ENCODE measurements at regions of chr7 and their contacts with region 1.

Region 1: DNA sequence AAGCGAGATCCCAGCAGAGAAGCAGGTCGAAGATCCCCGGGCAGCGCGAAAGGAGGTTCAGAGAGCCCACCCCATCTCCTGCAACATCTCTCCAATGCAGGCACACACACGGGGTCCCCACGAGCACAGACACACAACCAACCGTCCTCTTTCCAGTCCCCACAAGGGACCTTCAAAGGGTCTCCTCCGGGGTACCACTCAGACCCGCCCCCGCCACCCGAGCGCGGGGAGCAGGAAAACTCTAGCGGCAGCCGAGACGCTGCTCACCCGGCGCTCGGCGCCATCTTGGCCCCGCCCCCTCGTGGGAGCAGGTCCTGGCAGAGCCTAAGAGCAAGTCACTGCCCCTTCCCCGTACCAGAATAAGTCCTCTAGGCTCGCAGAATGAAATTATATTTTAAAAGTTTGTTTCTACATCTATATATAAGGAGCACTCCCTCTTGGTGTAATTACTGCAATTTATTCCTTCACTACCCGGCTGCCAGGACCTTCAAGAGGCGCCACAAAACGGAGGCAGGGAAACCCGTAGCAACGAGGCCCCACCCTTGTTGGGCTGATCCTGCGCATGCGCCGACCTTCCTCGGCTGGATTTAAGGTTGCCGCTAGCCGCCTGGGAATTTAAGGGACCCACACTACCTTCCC is at the starts of genes CNPY4 and TAF6:
- DNase-seq: peak; percentile 96
- H3K4me3 ChIP-seq: peak within 1 kb of the TSS; percentile 70 to 89 (median 77)
- H3K27ac ChIP-seq: peak within 1 kb of the TSS; percentile 83
- H3K4me1 ChIP-seq: peaks cover 11% of the 10 kb centered on the region
- H3K27me3 ChIP-seq: no peaks in the 10 kb centered on the region
- CTCF ChIP-seq: no peak
- POLR2A ChIP-seq: peak; percentile 86
- total RNA-seq, gene CNPY4: 18.0 and 33.7 TPM in 2 replicates
- total RNA-seq, gene TAF6: 64.6 and 67.3 TPM in 2 replicates

Region 2: DNA sequence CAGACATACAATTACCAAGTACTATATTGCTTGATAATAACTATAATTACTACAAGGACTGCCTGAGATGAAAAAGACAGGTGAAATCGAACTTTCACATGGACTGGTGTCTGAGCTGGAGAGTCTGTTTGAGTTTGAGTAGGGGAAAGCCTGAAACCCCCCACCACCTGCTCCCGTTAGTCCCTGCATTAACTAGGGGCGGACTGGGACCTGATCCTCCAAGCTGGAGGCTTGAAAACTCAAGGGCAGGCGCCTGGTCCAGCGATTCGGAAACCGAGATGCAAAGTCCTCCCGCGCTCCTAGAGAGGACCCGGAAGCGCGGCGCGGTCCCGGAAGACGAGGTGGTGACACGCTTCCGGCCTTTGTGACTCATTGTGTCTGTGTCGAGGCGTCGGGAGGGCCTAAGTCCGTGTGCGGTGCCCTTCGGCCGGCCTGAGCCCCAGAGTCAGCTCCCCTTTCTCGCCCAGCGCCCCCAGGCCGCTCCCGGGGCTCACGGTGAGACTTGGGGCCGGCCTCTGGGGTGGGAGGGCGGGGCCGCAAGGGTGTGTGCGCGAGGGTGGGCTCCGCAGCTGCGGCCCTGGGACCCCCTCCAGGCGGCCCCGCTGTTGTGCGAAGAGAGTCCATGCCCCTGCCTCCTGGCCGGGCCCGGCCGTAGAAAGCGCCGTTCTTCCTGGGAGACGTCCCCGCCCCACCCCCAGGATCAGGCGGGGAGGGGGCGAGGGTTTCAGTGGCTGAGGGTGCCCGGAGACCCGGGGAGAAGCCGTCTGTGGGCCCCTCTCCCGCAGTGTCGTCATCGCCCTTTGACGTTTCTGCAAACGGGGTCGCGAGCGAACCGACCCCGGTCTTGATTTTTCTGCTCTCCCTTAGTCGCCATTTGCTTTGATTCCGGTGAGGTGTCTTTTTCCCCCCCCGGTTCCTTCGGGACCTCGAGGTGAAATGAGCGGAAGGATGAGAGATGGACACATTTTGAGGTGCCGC is 103.7 kb before region 1 on chr7 and contains the start of gene ZKSCAN1:
- CTCF ChIA-PET with region 1: no interaction called
- POLR2A ChIA-PET with region 1: no interaction called
- dilution Hi-C with region 1: no loop called
- intact Hi-C with region 1: no loop called
- DNase-seq: peak; percentile 89
- H3K4me3 ChIP-seq: peak within 1 kb of the TSS; percentile 92 to 100 (median 97)
- H3K27ac ChIP-seq: peak within 1 kb of the TSS; percentile 98
- H3K4me1 ChIP-seq: peaks cover 12% of the 10 kb centered on the region
- H3K27me3 ChIP-seq: no peaks in the 10 kb centered on the region
- CTCF ChIP-seq: no peak
- POLR2A ChIP-seq: peak; percentile 89
- total RNA-seq, gene ZKSCAN1: 52.8 and 57.8 TPM in 2 replicates

Region 3: DNA sequence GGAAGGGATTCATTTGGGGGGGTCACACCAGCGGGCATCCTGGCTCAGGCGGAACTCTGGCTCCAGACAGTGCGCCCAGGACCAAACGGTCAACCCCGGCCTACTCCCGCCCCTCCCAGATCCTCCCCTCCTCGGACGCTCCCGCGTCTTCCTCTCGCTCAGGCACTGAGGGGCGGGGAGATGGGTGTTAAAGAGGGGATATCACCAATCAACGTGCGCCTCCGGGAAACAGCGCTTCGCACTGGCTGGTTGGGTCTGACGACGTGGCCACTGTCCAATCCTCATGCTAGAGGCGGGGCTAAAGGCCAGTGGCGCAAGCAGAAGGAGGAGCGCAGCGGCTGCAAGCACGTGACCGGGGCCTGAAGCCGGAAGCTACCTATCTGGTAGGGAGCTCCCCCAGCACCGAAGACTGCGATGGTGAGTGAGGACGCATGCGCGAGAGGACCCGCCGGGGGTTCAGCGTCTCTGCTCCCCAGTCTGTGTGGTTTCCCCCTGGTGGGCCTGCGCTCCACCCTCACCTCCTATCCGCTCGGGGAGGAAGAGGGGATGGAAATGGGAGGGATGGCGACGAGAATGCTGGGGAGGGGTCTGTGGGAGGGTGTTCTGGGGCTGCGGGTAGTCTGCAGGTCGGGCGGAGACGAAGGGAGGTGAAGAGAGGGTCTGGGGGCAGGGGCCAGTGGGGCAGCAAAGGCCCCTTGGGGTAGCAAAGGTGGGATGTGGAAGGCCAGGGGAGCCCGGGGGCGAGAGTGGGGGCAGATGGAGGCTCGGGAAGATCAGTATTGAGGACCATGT is 29.6 kb after region 1 on chr7 and contains the start of gene LAMTOR4:
- CTCF ChIA-PET with region 1: no interaction called
- POLR2A ChIA-PET with region 1: no interaction called
- dilution Hi-C with region 1: no loop called
- intact Hi-C with region 1: loop called (anchors 1 kb)
- DNase-seq: peak; percentile 99
- H3K4me3 ChIP-seq: peak within 1 kb of the TSS; percentile 70 to 82 (median 80)
- H3K27ac ChIP-seq: peak within 1 kb of the TSS; percentile 22
- H3K4me1 ChIP-seq: peaks cover 6% of the 10 kb centered on the region
- H3K27me3 ChIP-seq: no peaks in the 10 kb centered on the region
- CTCF ChIP-seq: no peak
- POLR2A ChIP-seq: peak; percentile 45
- total RNA-seq, gene LAMTOR4: 139 and 140 TPM in 2 replicates

Region 4: DNA sequence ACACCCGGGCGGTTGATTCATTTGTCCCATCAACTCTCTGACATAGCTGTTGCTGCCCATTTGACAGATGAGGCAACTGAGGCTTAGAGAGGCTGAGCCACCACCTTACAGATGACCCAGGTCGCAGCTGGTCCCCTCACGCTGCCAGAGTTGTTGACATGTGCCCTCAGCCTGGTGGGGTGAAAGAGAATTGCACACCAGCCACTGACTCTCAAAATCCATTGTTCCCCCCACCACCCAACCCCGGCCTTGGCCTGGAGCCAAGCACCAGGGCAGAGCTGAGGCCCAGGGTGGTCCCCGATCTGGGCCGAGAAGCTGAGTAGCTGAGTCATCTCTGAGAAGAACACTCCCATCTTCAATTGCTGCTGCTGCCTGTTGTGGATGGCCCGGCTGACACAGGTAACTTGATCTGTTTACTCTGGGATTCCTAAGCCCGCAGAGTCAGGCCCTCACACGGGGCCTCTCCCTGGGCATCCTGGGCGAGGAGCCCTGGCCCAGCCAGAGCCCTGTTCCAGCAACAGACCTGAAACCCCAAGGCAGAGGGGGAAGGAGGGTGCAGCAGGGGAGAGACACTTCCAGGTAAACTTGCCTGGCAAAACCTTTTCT is 128.1 kb after region 1 on chr7:
- CTCF ChIA-PET with region 1: no interaction called
- POLR2A ChIA-PET with region 1: no interaction called
- dilution Hi-C with region 1: no loop called
- intact Hi-C with region 1: no loop called
- DNase-seq: peak; percentile 3
- H3K4me3 ChIP-seq: no peak overlapping the region
- H3K27ac ChIP-seq: no peak overlapping the region
- H3K4me1 ChIP-seq: no peaks in the 10 kb centered on the region
- H3K27me3 ChIP-seq: no peaks in the 10 kb centered on the region
- CTCF ChIP-seq: no peak
- POLR2A ChIP-seq: no peak